ENCODE measurements at regions of chr2 and their contacts with region 1.

Region 1: GRCh38 chr2:174577967-174578589 is 19.5 kb downstream of the WIPF1 start:
- DNase-seq: peak; percentile 63 to 77 (median 67)
- H3K4me3 ChIP-seq: no peak overlapping the region
- H3K4me3 Mint-ChIP-seq: peak overlapping the region in 1 of 8 donors; percentile 3
- H3K27ac ChIP-seq: no peak overlapping the region
- H3K27ac Mint-ChIP-seq: peak overlapping the region; percentile 66 to 88 (median 80)
- H3K4me1 ChIP-seq: peaks cover 93% of the 10 kb centered on the region
- H3K4me1 Mint-ChIP-seq: peaks cover 49 to 93% (median 68%) of the 10 kb centered on the region in 4 donors
- H3K27me3 ChIP-seq: no peaks in the 10 kb centered on the region
- H3K27me3 Mint-ChIP-seq: no peaks in the 10 kb centered on the region

Region 2: GRCh38 chr2:174561283-174561971 is 16.7 kb before region 1 on chr2:
- CTCF ChIA-PET with region 1: interaction called, 4 read pairs
- POLR2A ChIA-PET with region 1: interaction called, 5 read pairs
- intact Hi-C with region 1: loop called (anchors 1 kb)
- DNase-seq: no peak
- H3K4me3 ChIP-seq: no peak overlapping the region
- H3K4me3 Mint-ChIP-seq: no peak overlapping the region
- H3K27ac ChIP-seq: no peak overlapping the region
- H3K27ac Mint-ChIP-seq: peak overlapping the region in 6 of 7 donors; percentile 36 to 94 (median 72)
- H3K4me1 ChIP-seq: no peaks in the 10 kb centered on the region
- H3K4me1 Mint-ChIP-seq: peaks cover 4 to 14% (median 12%) of the 10 kb centered on the region in 4 donors
- H3K27me3 ChIP-seq: no peaks in the 10 kb centered on the region
- H3K27me3 Mint-ChIP-seq: no peaks in the 10 kb centered on the region

Region 3: GRCh38 chr2:174682578-174683391 is 104.7 kb after region 1 on chr2:
- CTCF ChIA-PET with region 1: interaction called, 71 read pairs
- POLR2A ChIA-PET with region 1: interaction called, 3 read pairs
- intact Hi-C with region 1: loop called (anchors 1 kb)
- DNase-seq: peak; percentile 66 to 79 (median 73)
- H3K4me3 ChIP-seq: peak overlapping the region; percentile 49 to 69
- H3K4me3 Mint-ChIP-seq: peak overlapping the region; percentile 89 to 97 (median 93)
- H3K27ac ChIP-seq: peak overlapping the region; percentile 84
- H3K27ac Mint-ChIP-seq: peak overlapping the region; percentile 86 to 96 (median 94)
- H3K4me1 ChIP-seq: peaks cover 48% of the 10 kb centered on the region
- H3K4me1 Mint-ChIP-seq: peaks cover 36 to 60% (median 48%) of the 10 kb centered on the region in 4 donors
- H3K27me3 ChIP-seq: no peaks in the 10 kb centered on the region
- H3K27me3 Mint-ChIP-seq: no peaks in the 10 kb centered on the region

Measured in CD4-positive, alpha-beta memory T cell (primary cell).